Heart left ventricle (tissue), 16 donors: ENCODE measurements at regions of chr11 and their contacts with region 1.

Region 1: GRCh38 chr11:66126808-66127555 is 56.9 kb downstream of the PACS1 start:
- DNase-seq: peak; percentile 65 to 75 (median 70)
- ATAC-seq: peak; percentile 79 to 93 (median 90)
- H3K4me3 ChIP-seq: peak overlapping the region in 4 of 12 donors; percentile 22 to 31 (median 28)
- H3K27ac ChIP-seq: peak overlapping the region; percentile 41 to 89 (median 68)
- H3K4me1 ChIP-seq: peaks cover 0 to 41% (median 23%) of the 10 kb centered on the region in 12 donors
- H3K27me3 ChIP-seq: no peaks in the 10 kb centered on the region
- CTCF ChIP-seq: peak in 3 of 12 donors; percentile 7 to 18 (median 18)
- POLR2A ChIP-seq: no peak

Region 2: DNA sequence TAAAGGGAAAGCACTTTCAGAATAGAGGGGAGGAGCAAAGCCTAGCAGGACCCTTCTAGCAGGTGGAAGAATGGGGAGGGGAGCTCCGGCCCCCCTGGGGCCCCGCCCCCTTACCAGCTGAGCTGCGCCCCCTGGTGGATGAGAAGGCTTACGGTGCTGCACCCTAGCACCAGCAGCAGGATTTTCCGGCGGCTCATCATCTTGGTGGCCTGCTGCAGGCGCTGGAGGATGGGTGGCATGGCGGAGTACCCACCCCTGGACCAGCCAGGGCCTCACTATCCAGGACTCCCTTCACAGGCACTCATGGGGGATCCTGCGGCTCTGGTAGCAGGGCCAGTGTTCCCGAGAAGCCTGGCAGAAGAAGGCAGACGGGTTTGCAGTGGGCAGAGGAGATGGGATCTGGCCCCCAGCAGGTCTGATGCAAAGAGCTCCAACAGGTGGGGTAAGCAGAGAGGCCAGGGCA is 81.8 kb before region 1 on chr11:
- intact Hi-C with region 1: no loop called
- DNase-seq: peak; percentile 63 to 88 (median 75)
- ATAC-seq: peak; percentile 45 to 75 (median 66)
- H3K4me3 ChIP-seq: no peak overlapping the region
- H3K27ac ChIP-seq: no peak overlapping the region
- H3K4me1 ChIP-seq: peaks cover 0 to 28% (median 5%) of the 10 kb centered on the region in 12 donors
- H3K27me3 ChIP-seq: peaks cover 0 to 20% (median 5%) of the 10 kb centered on the region in 9 donors
- CTCF ChIP-seq: peak; percentile 76 to 95 (median 92)
- POLR2A ChIP-seq: no peak

Region 3: DNA sequence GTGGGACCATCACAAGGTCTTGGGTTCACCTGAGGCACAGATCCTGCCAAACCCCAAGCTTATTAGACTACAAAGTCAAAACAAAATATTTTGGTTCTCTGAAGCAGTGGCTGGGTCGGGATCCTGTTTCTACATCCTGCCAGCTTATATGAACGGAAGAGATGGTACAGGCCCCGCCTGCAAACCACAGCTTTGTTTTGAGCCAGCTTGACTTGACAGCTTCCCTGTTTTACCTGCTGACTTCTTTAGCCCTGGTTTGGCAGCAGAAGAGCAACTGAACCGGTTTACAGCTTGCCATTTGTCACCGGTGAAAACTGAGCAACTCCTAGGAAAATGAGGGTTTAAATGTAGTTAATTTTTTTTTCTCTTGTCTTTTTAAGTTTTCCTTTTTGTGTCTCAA is 45.5 kb before region 1 on chr11:
- intact Hi-C with region 1: loop called in 4 of 10 experiments (anchors 5 to 10 kb)
- DNase-seq: peak in 4 of 5 donors; percentile 40 to 63 (median 46)
- ATAC-seq: peak in 2 of 4 donors; percentile 63
- H3K4me3 ChIP-seq: peak overlapping the region in 1 of 12 donors; percentile 30
- H3K27ac ChIP-seq: peak overlapping the region in 5 of 12 donors; percentile 10 to 81 (median 16)
- H3K4me1 ChIP-seq: peaks cover 0 to 71% (median 51%) of the 10 kb centered on the region in 12 donors
- H3K27me3 ChIP-seq: no peaks in the 10 kb centered on the region
- CTCF ChIP-seq: no peak
- POLR2A ChIP-seq: no peak

Region 4: GRCh38 chr11:66242095-66242765 is 115.2 kb after region 1 on chr11:
- intact Hi-C with region 1: no loop called
- DNase-seq: peak in 1 of 5 donors; percentile 57
- ATAC-seq: peak in 2 of 4 donors; percentile 16 to 19
- H3K4me3 ChIP-seq: no peak overlapping the region
- H3K27ac ChIP-seq: no peak overlapping the region
- H3K4me1 ChIP-seq: peaks cover 0 to 10% (median 3%) of the 10 kb centered on the region in 12 donors
- H3K27me3 ChIP-seq: no peaks in the 10 kb centered on the region
- CTCF ChIP-seq: no peak
- POLR2A ChIP-seq: no peak